GM10248 (cell line): ENCODE measurements at regions of chr13 and their contacts with region 1.

Region 1: DNA sequence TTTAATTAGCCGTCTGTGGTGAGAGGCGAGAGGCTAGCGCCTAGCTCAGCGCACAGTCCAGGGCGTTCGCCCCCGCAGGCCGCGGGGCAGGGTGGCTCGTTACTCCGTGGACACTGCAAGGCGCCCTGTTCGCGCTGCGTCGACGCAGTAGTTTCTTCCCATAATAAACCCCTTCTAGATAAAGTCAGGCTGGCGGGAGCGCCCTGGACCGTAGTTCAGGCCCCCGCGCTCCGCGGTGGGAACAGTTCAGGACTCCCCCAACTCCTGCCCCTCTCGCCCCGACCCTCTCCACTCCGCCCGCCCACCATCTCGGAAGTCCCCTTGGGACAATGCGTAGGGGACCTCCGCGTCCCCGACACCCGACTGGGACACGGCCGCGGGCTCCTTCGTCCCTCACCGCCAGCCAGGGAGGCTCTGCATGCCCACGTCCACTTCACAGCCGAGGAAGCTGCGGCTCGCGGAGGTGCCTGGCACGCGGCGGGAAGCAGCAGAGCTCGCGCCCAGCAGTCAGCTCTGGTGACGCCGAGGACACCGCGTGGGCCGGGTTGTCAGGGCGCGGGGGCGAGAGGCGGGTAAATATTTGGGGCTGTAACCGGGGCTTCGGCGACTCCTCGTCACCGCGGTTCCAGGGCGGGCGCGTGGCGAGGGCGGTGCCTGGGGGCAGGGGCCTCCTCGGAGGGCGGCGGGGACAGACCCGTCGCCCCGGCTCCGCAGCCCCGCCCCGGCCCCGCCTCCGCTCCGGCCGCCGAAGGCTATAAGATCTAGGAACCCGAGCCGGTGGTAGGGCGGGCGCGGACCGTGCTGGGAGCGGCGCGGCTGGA is at the start of gene RGCC:
- DNase-seq: peak; percentile 91
- CTCF ChIP-seq: no peak

Region 2: DNA sequence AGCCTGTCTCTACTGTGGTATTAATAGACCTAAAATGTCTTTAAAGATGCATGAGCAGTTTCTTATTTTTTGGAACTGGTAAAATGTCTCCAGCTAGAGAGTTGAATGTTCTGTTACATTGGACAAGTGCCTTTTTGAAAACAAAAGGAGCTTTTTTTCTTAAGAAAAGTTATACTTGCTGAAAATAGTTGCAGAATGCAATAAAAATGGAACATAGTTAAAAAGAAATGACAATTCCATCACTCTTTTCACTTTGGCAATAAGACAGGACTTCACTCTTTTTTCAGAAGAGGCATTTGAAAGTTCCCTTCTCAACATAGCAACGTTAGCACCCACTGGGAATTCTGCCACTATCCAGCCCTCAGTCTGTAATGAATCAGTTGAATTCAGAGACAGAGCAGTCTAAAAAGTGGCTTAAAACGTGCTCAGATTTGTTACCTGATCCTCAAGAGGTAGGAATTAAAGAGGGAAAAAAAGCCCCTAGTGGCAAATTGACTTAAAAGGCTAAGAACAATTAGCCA is 10.5 kb after region 1 on chr13:
- CTCF ChIA-PET with region 1: interaction called, 35 read pairs
- POLR2A ChIA-PET with region 1: interaction called, 4 read pairs
- DNase-seq: no peak
- CTCF ChIP-seq: no peak

Region 3: DNA sequence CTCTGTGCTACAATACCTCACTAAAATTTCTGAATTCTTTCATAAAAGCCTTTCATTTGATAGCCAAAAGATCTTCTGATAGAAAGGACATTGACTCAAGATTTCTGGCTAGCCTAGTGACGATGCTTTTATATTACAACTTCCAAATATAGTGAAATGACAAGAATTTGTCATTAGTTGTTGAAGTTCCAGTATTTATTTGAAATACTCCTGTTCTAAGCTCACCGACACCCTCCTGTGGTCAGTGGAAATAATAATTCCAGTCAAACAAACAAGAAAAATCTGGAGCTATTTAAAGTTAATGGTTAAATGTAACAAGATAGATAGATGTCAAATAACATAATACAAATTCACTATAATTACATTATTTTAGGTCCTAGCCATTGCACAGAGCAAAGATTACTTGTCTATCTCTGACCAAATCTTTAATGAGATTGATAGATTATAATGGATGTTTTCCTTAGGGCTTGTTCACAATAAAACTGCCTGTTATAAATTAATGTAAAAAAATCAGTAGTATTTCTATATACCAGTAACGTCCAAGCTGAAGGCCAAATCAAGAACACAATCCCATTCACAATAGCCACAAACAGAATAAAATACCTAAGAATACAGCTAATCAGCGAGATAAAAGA is 195.9 kb after region 1 on chr13:
- CTCF ChIA-PET with region 1: interaction called, 12 read pairs
- POLR2A ChIA-PET with region 1: no interaction called
- DNase-seq: peak; percentile 51
- CTCF ChIP-seq: peak; percentile 57